ENCODE measurements at regions of chr7 and their contacts with region 1.

Region 1: DNA sequence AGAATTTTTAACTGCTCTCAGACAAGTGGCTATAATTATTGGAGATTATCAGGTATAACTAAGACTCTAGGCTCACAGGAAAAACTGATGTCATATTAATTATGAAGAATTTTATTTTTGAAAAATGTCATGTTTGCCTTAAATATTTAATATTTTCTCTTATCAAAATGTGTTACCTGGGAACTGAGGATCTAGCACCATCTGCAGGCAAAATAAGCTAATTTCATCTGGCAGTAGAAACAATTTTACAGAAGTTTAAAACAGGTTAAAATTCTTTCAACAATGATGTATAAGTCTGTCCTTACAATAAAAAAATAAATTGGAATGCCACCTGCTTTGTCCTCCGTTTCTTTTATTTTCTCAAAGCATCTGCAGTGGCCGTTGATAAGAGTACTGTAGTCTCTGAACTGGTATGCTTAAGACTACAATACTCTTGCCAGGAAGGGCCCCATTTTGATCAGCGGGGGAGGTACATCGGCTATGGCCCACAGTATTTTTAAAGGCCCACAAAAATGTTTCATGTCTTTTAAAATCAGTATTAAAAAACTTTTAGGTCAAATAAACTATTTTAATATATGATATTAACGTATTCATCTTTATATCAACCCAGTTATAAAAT is 81.3 kb downstream of the VWDE start:
- DNase-seq: no peak
- H3K4me3 ChIP-seq: no peak overlapping the region
- H3K27ac ChIP-seq: no peak overlapping the region
- H3K4me1 ChIP-seq: no peaks in the 10 kb centered on the region
- H3K27me3 ChIP-seq: no peaks in the 10 kb centered on the region
- CTCF ChIP-seq: peak; percentile 52 to 71

Region 2: GRCh38 chr7:11427686-11428273 is 894.6 kb before region 1 on chr7:
- CTCF ChIA-PET with region 1: no interaction called
- dilution Hi-C with region 1: no loop called
- in situ Hi-C with region 1: loop called (anchors 25 kb)
- intact Hi-C with region 1: loop called (anchors 2 kb)
- DNase-seq: peak; percentile 38
- H3K4me3 ChIP-seq: no peak overlapping the region
- H3K27ac ChIP-seq: no peak overlapping the region
- H3K4me1 ChIP-seq: no peaks in the 10 kb centered on the region
- H3K27me3 ChIP-seq: peaks cover 4% of the 10 kb centered on the region
- CTCF ChIP-seq: peak; percentile 64 to 73

Region 3: GRCh38 chr7:11831736-11832495 is 490.5 kb before region 1 on chr7 and contains the start of gene THSD7A:
- CTCF ChIA-PET with region 1: no interaction called
- dilution Hi-C with region 1: no loop called
- in situ Hi-C with region 1: loop called (anchors 25 kb)
- intact Hi-C with region 1: loop called (anchors 2 kb)
- DNase-seq: peak; percentile 17
- H3K4me3 ChIP-seq: peak within 1 kb of the TSS; percentile 30 to 46 (median 41)
- H3K27ac ChIP-seq: no peak within 1 kb of the TSS
- H3K4me1 ChIP-seq: peaks cover 14% of the 10 kb centered on the region
- H3K27me3 ChIP-seq: peaks cover 23% of the 10 kb centered on the region
- CTCF ChIP-seq: no peak
- total RNA-seq, gene THSD7A: not detected

Region 4: GRCh38 chr7:12067141-12067831 is 255.1 kb before region 1 on chr7:
- CTCF ChIA-PET with region 1: no interaction called
- dilution Hi-C with region 1: no loop called
- in situ Hi-C with region 1: loop called (anchors 5 to 10 kb)
- intact Hi-C with region 1: loop called (anchors 1 kb)
- DNase-seq: peak; percentile 28
- H3K4me3 ChIP-seq: no peak overlapping the region
- H3K27ac ChIP-seq: no peak overlapping the region
- H3K4me1 ChIP-seq: no peaks in the 10 kb centered on the region
- H3K27me3 ChIP-seq: no peaks in the 10 kb centered on the region
- CTCF ChIP-seq: peak; percentile 46 to 70

Region 5: GRCh38 chr7:12211054-12211710 is 111.2 kb before region 1 on chr7 and contains the start of gene TMEM106B:
- CTCF ChIA-PET with region 1: no interaction called
- dilution Hi-C with region 1: no loop called
- in situ Hi-C with region 1: no loop called
- intact Hi-C with region 1: loop called (anchors 1 kb)
- DNase-seq: peak; percentile 93
- H3K4me3 ChIP-seq: peak within 1 kb of the TSS; percentile 59 to 62 (median 60)
- H3K27ac ChIP-seq: peak within 1 kb of the TSS; percentile 55
- H3K4me1 ChIP-seq: peaks cover 8% of the 10 kb centered on the region
- H3K27me3 ChIP-seq: no peaks in the 10 kb centered on the region
- CTCF ChIP-seq: peak in 1 of 2 donors; percentile 39
- total RNA-seq, gene TMEM106B: 33.5 to 75.2 TPM

Region 6: GRCh38 chr7:12297283-12298115 is 24.9 kb before region 1 on chr7:
- CTCF ChIA-PET with region 1: no interaction called
- dilution Hi-C with region 1: no loop called
- in situ Hi-C with region 1: no loop called
- intact Hi-C with region 1: loop called (anchors 2 kb)
- DNase-seq: peak; percentile 76
- H3K4me3 ChIP-seq: no peak overlapping the region
- H3K27ac ChIP-seq: no peak overlapping the region
- H3K4me1 ChIP-seq: peaks cover 4% of the 10 kb centered on the region
- H3K27me3 ChIP-seq: no peaks in the 10 kb centered on the region
- CTCF ChIP-seq: no peak